ENCODE measurements at regions of chr9 and their contacts with region 1.

Region 1: DNA sequence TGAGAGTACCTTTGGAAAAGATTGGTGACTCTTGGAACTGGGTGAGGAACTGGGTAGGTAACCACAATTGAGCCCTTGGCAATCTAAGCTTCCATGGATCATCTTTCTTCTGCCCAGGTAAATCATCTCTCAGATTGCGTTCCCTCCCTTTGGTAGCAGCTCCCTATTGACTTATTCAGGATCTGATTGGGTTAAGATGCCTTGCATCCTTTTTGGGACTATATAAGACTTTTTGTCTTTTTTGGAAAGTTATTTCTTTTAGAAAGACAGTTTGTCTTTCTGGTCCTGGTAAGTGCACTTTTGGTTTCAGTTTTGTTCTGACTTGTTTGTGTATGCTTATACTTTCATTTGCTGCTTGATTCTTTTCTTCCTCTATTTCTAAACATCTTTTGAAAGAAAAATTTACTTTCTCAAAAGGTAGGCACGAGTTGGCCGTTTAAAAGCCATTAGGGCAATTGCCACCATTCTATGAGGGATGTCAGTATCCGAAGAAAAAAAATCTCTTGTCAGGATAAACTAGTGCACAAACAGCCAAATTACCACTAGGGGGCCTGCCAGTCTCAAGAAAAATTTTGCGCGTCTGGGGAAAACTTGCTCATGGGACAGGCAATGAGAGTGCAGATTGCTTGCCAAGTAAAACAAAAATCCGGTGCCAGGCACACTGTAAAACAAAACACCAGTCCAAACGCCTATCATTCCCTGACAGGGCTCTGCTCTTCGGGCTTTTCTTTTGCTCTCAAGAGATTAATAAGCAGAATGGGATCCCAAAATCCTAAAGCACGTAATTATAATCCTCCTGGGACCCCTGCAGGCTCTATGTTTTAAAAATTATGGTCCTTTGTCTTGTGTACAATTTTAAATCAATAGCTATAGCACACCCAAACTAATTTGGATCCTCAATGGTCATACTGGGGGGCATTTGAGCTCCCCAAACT is 12.8 kb downstream of the OR1J1 start:
- DNase-seq: peak; percentile 90
- H3K4me3 Mint-ChIP-seq: peak overlapping the region; percentile 86
- H3K27ac Mint-ChIP-seq: peak overlapping the region; percentile 81
- H3K4me1 Mint-ChIP-seq: peaks cover 12% of the 10 kb centered on the region
- H3K27me3 Mint-ChIP-seq: peaks cover 34% of the 10 kb centered on the region

Region 2: DNA sequence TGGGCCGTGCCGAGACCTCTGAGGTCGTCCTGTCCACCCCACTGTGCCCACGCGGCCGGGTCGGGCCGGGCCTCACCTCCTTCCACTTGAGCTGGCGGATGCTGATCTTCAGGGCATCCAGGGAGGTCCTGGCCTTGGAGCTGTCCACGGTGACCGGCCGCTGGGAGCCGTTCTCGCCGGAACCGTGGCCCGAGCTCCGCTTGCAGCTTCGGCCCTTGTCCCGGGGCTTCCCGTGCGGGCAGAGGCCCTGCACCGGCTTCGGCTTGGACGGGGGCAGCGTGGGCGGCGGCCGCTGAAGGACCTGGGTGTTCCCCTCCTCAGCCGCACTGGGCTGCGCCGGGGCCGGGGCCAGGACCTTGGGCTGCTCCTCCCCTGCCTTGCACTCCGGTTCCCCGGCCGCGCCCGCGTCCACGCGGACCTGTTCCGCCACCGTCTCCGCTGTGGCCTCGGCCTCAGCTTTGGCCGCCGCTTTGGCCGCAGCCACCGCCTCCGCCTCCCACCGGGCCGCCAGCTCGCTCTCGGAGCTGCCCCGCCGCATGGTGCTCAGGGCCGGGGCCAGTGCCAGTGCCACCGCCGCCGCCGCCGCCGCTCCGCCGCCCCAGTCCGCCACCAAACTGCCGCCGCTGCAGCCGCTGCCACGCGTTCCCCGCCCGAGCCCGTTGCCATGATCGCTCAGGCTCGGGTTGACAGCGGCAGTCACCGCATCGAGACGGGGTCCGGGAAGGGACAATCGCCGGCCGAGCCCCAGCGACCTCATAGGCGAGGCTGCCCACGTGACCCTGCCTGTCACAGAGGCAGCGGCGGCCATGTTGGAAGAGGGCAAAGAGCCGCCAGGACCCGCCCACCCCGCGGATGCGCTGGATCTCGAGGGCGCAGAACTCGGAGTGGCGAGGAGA is 372.0 kb before region 1 on chr9 and contains the start of gene TTLL11:
- intact Hi-C with region 1: loop called (anchors 10 kb)
- DNase-seq: peak; percentile 99
- H3K4me3 Mint-ChIP-seq: peak within 1 kb of the TSS; percentile 81
- H3K27ac Mint-ChIP-seq: peak within 1 kb of the TSS; percentile 82
- H3K4me1 Mint-ChIP-seq: peaks cover 34% of the 10 kb centered on the region
- H3K27me3 Mint-ChIP-seq: peaks cover 21% of the 10 kb centered on the region
- total RNA-seq, gene TTLL11: 2.4 and 2.8 TPM in 2 replicates

Region 3: DNA sequence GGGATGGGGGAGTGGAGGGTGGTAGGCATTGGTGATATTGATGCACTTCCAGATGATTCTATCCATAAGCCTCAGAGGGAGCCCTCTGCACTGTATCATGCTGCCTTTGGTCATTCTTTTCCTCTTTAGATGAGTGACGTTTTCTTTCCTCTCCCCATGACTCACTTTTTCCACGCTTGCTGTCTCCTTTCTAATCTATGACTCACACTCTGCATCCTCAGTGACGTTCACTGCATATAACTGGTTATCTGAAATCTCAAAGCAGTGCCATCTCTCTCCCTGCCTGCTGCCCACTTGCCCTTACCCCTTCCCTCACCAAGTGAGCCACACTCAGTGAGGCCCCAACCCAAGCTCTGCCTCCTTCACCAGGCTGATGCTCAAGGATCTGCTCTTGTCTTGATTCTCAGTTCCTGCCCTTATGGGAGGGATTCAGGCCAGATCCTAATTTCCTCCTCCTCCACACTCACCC is 62.5 kb before region 1 on chr9:
- intact Hi-C with region 1: loop called (anchors 5 kb)
- DNase-seq: peak; percentile 82
- H3K4me3 Mint-ChIP-seq: peak overlapping the region; percentile 3
- H3K27ac Mint-ChIP-seq: peak overlapping the region; percentile 91
- H3K4me1 Mint-ChIP-seq: peaks cover 23% of the 10 kb centered on the region
- H3K27me3 Mint-ChIP-seq: peaks cover 2% of the 10 kb centered on the region